Heart left ventricle (tissue), 16 donors: ENCODE measurements at regions of chr3 and their contacts with region 1.

Region 1: GRCh38 chr3:52108302-52109232 is 45.7 kb downstream of the POC1A start:
- DNase-seq: peak; percentile 67 to 79 (median 73)
- ATAC-seq: peak; percentile 66 to 88 (median 81)
- H3K4me3 ChIP-seq: peak overlapping the region in 9 of 12 donors; percentile 4 to 37 (median 29)
- H3K27ac ChIP-seq: peak overlapping the region in 11 of 12 donors; percentile 45 to 85 (median 75)
- H3K4me1 ChIP-seq: peaks cover 4 to 40% (median 36%) of the 10 kb centered on the region in 12 donors
- H3K27me3 ChIP-seq: no peaks in the 10 kb centered on the region
- CTCF ChIP-seq: peak; percentile 20 to 73 (median 52)
- POLR2A ChIP-seq: no peak

Region 2: DNA sequence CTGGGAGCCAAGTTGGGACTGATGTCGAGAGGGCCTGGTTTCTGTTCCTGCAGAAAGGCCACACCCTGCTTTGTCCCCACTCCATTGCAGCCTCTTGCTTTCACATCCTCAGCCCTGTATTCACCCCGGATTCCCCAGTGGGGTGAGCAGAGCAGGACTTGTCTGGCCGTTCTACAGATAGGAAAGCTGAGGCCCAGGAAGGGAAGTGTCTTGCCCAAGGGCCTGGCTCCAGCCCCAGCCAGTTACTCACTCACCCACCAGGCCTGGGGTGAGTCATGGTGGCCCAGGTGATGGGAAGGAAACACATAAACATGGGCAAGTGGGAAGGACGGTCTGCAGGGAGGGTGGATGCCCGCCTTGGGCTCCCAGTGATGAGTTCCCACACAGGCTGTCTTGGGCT is 46.1 kb before region 1 on chr3:
- intact Hi-C with region 1: loop called in 6 of 10 experiments (anchors 2 to 5 kb)
- DNase-seq: peak in 1 of 5 donors; percentile 77
- ATAC-seq: peak in 2 of 4 donors; percentile 26 to 35
- H3K4me3 ChIP-seq: no peak overlapping the region
- H3K27ac ChIP-seq: no peak overlapping the region
- H3K4me1 ChIP-seq: peaks cover 0 to 44% (median 13%) of the 10 kb centered on the region in 12 donors
- H3K27me3 ChIP-seq: no peaks in the 10 kb centered on the region
- CTCF ChIP-seq: no peak
- POLR2A ChIP-seq: no peak

Region 3: GRCh38 chr3:52070724-52071621 is 37.6 kb before region 1 on chr3:
- intact Hi-C with region 1: loop called in 1 of 10 experiments (anchors 5 kb)
- DNase-seq: peak in 4 of 5 donors; percentile 56 to 83 (median 69)
- ATAC-seq: peak; percentile 86 to 92 (median 88)
- H3K4me3 ChIP-seq: no peak overlapping the region
- H3K27ac ChIP-seq: peak overlapping the region; percentile 80 to 92 (median 85)
- H3K4me1 ChIP-seq: peaks cover 0 to 33% (median 21%) of the 10 kb centered on the region in 12 donors
- H3K27me3 ChIP-seq: no peaks in the 10 kb centered on the region
- CTCF ChIP-seq: peak in 2 of 12 donors; percentile 28 to 29
- POLR2A ChIP-seq: peak in 1 of 2 donors; percentile 27